ENCODE measurements at regions of chr3 and their contacts with region 1.

Region 1: DNA sequence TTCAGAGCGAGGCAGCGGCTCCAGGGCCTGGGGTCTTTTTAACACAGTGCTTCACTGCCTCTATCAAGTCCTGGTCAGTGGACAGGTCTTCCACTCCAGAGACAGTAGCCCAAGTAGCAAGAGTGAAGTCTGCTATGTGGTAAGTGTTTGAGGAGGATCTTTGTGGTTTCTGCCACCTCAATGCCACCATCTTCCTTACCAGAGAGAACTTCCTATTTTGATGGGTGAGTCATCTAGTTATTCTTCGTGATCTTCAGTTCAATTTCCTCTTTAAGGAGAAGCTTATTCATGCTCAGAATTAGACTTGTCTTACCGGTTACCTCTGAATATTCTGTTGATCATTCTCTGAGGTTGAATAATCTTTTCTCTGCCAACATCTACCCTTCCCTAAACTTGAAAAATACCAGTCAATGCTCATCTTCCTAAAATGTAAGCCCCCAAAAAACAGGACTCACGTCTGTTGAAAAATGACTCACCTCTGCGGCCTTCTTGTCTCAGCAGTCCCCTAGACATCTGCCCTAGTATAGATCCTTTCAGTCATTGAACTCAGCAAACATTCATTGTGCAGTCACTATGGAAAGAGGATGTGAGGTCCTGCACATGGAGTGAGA is 32.2 kb upstream of the BCL6 start:
- DNase-seq: peak; percentile 89 to 97 (median 97)
- H3K4me3 ChIP-seq: peak overlapping the region in 1 of 3 experiments; percentile 30
- H3K4me3 Mint-ChIP-seq: peak overlapping the region in 1 of 2 donors; percentile 72
- H3K27ac ChIP-seq: peak overlapping the region; percentile 44 to 90
- H3K27ac Mint-ChIP-seq: peak overlapping the region; percentile 95 to 100 (median 98)
- H3K4me1 ChIP-seq: peaks cover 70 to 74% of the 10 kb centered on the region in 2 donors
- H3K4me1 Mint-ChIP-seq: peaks cover 57% of the 10 kb centered on the region
- H3K27me3 ChIP-seq: no peaks in the 10 kb centered on the region
- H3K27me3 Mint-ChIP-seq: peaks cover 0 to 4% (median 2%) of the 10 kb centered on the region in 3 donors
- CTCF ChIP-seq: no peak

Region 2: DNA sequence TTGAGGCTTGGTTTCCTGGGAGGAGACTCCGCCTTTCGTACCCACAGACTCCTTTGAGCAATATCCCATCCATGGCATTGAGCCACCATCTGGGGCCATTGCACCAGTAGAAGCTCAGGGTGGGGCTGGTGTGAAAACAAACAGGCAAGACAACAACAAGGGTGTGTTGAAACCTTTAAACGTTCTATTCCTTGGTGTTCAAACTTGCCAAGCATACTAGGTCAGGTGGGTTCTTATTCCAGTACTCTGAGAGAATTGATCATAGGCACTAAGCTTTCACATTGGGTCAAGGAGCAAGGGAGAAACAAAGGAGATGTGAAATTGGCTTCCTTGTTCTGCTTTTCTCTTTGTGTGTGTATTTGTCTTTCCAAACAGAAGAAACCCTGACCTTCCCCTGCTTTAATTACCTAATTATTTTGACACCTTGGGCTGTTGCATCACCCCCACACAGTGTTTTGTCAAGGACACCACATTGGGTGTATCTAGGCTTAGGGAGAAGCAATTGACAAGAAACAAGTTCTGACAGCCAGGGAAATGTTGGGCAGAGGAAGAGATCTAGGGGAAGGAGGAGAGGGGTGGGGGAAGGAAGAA is 73.0 kb after region 1 on chr3:
- intact Hi-C with region 1: loop called in 1 of 2 experiments (anchors 10 kb)
- DNase-seq: peak; percentile 46 to 80 (median 58)
- H3K4me3 ChIP-seq: peak overlapping the region in 1 of 3 experiments; percentile 18
- H3K4me3 Mint-ChIP-seq: peak overlapping the region in 1 of 2 donors; percentile 65
- H3K27ac ChIP-seq: peak overlapping the region; percentile 25 to 68
- H3K27ac Mint-ChIP-seq: peak overlapping the region; percentile 82 to 97 (median 90)
- H3K4me1 ChIP-seq: peaks cover 39 to 51% of the 10 kb centered on the region in 2 donors
- H3K4me1 Mint-ChIP-seq: peaks cover 41% of the 10 kb centered on the region
- H3K27me3 ChIP-seq: no peaks in the 10 kb centered on the region
- H3K27me3 Mint-ChIP-seq: peaks cover 0 to 4% (median 2%) of the 10 kb centered on the region in 3 donors
- CTCF ChIP-seq: no peak

Region 3: DNA sequence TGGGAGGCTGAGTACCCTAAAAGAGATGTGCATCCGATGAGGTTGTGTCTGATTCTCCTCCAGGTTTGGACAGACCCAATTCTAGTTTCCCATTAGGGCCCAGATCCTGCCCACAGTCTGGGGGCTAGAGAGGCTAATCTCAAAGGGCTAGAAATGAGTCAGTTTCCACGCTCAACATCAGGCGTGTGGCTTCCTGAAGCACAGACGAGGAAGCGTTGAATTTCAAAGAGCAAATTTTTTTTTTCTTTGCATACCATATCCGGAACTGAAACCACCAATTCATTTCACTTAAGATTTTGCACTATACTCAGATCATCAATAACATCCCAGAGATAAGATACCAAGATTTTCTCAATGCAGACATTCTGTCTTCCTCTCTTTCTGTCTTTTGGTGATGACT is 141.6 kb after region 1 on chr3:
- intact Hi-C with region 1: loop called in 1 of 2 experiments (anchors 5 kb)
- DNase-seq: peak; percentile 73 to 91 (median 86)
- H3K4me3 ChIP-seq: peak overlapping the region in 2 of 3 experiments; percentile 25 to 69
- H3K4me3 Mint-ChIP-seq: peak overlapping the region; percentile 63 to 75
- H3K27ac ChIP-seq: peak overlapping the region; percentile 30 to 94
- H3K27ac Mint-ChIP-seq: peak overlapping the region; percentile 94 to 98 (median 95)
- H3K4me1 ChIP-seq: peaks cover 66 to 71% of the 10 kb centered on the region in 2 donors
- H3K4me1 Mint-ChIP-seq: peaks cover 73% of the 10 kb centered on the region
- H3K27me3 ChIP-seq: no peaks in the 10 kb centered on the region
- H3K27me3 Mint-ChIP-seq: no peaks in the 10 kb centered on the region
- CTCF ChIP-seq: no peak

Region 4: GRCh38 chr3:187968883-187969580 is 191.6 kb after region 1 on chr3:
- intact Hi-C with region 1: loop called in 1 of 2 experiments (anchors 5 kb)
- DNase-seq: peak; percentile 81 to 95 (median 93)
- H3K4me3 ChIP-seq: no peak overlapping the region
- H3K4me3 Mint-ChIP-seq: no peak overlapping the region
- H3K27ac ChIP-seq: peak overlapping the region; percentile 64 to 78
- H3K27ac Mint-ChIP-seq: peak overlapping the region; percentile 62 to 98 (median 90)
- H3K4me1 ChIP-seq: peaks cover 57 to 59% of the 10 kb centered on the region in 2 donors
- H3K4me1 Mint-ChIP-seq: peaks cover 51% of the 10 kb centered on the region
- H3K27me3 ChIP-seq: no peaks in the 10 kb centered on the region
- H3K27me3 Mint-ChIP-seq: peaks cover 0 to 4% (median 0%) of the 10 kb centered on the region in 3 donors
- CTCF ChIP-seq: no peak

Region 5: GRCh38 chr3:188154014-188154808 is 376.8 kb after region 1 on chr3 and contains the start of gene LPP:
- intact Hi-C with region 1: loop called in 1 of 2 experiments (anchors 10 kb)
- DNase-seq: peak; percentile 84 to 95 (median 91)
- H3K4me3 ChIP-seq: peak within 1 kb of the TSS; percentile 64 to 86 (median 69)
- H3K4me3 Mint-ChIP-seq: peak within 1 kb of the TSS; percentile 95 to 96
- H3K27ac ChIP-seq: peak within 1 kb of the TSS; percentile 87 to 96
- H3K27ac Mint-ChIP-seq: peak within 1 kb of the TSS; percentile 93 to 97 (median 96)
- H3K4me1 ChIP-seq: peaks cover 20 to 34% of the 10 kb centered on the region in 2 donors
- H3K4me1 Mint-ChIP-seq: peaks cover 44% of the 10 kb centered on the region
- H3K27me3 ChIP-seq: no peaks in the 10 kb centered on the region
- H3K27me3 Mint-ChIP-seq: peaks cover 0 to 6% (median 0%) of the 10 kb centered on the region in 3 donors
- CTCF ChIP-seq: no peak
- polyA plus RNA-seq, gene LPP: 14.1 to 23.2 (median 15.3) TPM

Measured in CD14-positive monocyte (primary cell).